ENCODE measurements at regions of chr2 and their contacts with region 1.

Region 1: GRCh38 chr2:72661985-72662384 is 163.8 kb downstream of the EXOC6B start:
- H3K4me3 ChIP-seq: no peak overlapping the region
- H3K27ac ChIP-seq: no peak overlapping the region
- H3K4me1 ChIP-seq: no peaks in the 10 kb centered on the region
- CTCF ChIP-seq: no peak

Region 2: DNA sequence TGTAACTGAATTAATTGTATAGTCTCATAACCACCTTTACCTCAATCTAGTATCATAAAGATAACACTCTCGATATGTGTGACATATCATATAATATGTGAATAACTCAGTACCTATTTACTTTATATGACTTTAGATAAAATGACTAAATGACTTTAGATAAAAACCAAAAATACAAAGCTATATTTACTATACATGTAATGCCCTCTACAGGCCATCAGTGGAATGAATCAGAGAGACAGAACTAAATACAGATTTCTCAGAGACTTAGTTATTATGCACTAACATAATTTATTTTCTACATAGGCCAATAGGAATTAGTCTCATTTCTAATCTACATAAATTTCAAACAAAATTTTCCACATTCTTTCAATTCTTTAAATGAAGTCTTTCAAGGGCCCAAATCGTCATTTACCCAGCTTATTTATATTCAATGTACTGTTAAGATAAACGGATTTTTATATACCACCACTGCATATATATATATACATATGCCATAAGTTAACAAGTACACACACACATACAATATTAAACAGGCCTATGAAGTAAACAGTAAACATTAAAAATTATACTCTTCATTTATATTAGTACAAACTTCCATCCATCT is 56.0 kb before region 1 on chr2:
- CTCF ChIA-PET with region 1: interaction called, 10 read pairs
- POLR2A ChIA-PET with region 1: no interaction called
- H3K4me3 ChIP-seq: no peak overlapping the region
- H3K27ac ChIP-seq: no peak overlapping the region
- H3K4me1 ChIP-seq: no peaks in the 10 kb centered on the region
- CTCF ChIP-seq: no peak

Measured in HEK293 (cell line).